IMR-90 (cell line): ENCODE measurements at regions of chr12 and their contacts with region 1.

Region 1: DNA sequence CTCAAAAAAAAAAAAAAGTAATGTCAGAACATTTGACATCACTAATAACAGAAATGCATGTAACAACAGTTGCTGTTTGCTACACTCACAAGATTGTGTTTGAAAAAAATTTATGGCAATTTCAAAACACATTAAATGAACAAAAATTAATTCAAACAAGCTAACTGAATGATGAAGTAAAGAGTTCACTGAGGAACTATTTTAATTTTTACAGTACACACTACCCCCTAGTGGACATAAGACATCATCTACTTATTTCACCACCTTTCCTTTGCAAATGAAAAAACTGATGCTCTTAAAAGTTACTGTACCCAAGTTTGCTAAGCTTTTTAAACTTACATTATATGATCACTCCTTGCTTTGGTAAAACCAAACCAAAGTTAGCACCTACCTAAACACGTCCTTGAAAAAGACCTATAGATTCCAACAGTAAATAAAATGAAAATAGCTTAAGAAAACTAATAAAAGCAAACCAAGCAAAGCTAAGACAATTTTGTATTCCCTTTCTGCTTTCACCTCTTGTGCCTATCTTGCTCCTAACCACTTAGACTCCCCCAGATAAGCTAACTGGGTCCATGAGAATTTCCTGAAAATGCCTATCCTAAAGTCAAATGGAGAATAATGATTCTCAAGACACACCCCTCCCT is 22.2 kb downstream of the UBE2N start:
- DNase-seq: peak; percentile 75
- ATAC-seq: peak; percentile 49; the same call in 1 of the 2 replicates
- H3K4me3 ChIP-seq: no peak overlapping the region
- H3K27ac ChIP-seq: no peak overlapping the region
- H3K4me1 ChIP-seq: peaks cover 19% of the 10 kb centered on the region
- H3K27me3 ChIP-seq: no peaks in the 10 kb centered on the region
- CTCF ChIP-seq: peak; percentile 63
- POLR2A ChIP-seq: no peak
- RAD21 ChIP-seq: peak; percentile 54

Region 2: GRCh38 chr12:92784795-92785562 is 634.5 kb before region 1 on chr12:
- CTCF ChIA-PET with region 1: no interaction called
- POLR2A ChIA-PET with region 1: no interaction called
- dilution Hi-C with region 1: no loop called
- in situ Hi-C with region 1: loop called (anchors 25 kb)
- intact Hi-C with region 1: no loop called
- DNase-seq: peak; percentile 79
- ATAC-seq: peak; percentile 74
- H3K4me3 ChIP-seq: no peak overlapping the region
- H3K27ac ChIP-seq: peak overlapping the region; percentile 74; the same call in 1 of the 2 replicates
- H3K4me1 ChIP-seq: peaks cover 8% of the 10 kb centered on the region
- H3K27me3 ChIP-seq: no peaks in the 10 kb centered on the region
- CTCF ChIP-seq: peak; percentile 61
- POLR2A ChIP-seq: no peak
- RAD21 ChIP-seq: peak; percentile 74

Region 3: GRCh38 chr12:92928962-92929915 is 490.3 kb before region 1 on chr12 and contains the start of gene EEA1:
- CTCF ChIA-PET with region 1: no interaction called
- POLR2A ChIA-PET with region 1: no interaction called
- dilution Hi-C with region 1: no loop called
- in situ Hi-C with region 1: no loop called
- intact Hi-C with region 1: loop called (anchors 5 kb)
- DNase-seq: peak; percentile 95
- ATAC-seq: peak; percentile 92
- H3K4me3 ChIP-seq: peak within 1 kb of the TSS; percentile 86
- H3K27ac ChIP-seq: peak within 1 kb of the TSS; percentile 100
- H3K4me1 ChIP-seq: peaks cover 8% of the 10 kb centered on the region
- H3K27me3 ChIP-seq: no peaks in the 10 kb centered on the region
- CTCF ChIP-seq: peak; percentile 34; the same call in 1 of the 2 replicates
- POLR2A ChIP-seq: peak; percentile 89
- RAD21 ChIP-seq: peak; percentile 27; the same call in 1 of the 2 replicates
- total RNA-seq, gene EEA1: 12.5 and 23.9 TPM in 2 replicates